Aorta (tissue), 5 donors: ENCODE measurements at regions of chr14 and their contacts with region 1.

Region 1: DNA sequence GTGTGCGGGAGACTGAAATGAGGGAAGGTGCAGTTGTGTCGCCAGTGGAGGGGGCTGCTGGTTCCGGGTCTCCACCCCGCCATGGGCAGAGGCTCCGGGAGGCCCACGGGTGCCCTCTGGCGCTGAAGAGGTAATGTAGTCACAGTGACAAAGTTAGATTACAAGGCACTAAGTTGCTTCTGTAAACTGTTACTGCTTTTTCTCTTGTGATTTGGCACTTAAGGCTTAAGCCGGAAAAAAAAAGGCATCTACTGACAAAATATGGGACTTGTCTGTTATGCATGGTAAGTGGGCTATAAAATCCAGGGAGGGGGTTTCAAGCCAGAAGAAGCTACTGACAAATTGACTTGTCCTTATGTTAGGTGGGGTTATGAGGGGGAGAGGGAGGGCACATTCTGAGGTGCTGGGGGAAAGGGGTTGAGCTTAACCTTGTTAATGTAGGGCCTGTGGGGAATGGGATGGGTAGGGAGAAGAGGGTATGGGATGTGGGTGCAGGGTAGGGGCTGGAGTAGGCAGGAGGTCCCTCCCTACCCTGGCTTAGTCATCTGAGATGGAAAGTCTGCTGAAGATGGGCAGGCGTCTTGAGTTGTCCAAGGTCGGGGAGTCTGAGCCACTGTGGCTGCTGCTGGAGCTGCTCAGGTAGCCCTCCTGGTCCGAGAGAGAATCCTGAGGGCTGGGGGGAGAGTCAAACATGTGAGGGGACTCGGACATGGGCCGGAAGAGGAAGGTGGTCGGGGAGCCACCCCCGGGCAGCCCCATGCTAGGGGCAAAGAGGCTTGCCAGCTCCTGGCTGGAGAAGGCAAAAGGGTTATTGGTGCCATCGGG is 3.7 kb downstream of the ZFP36L1 start:
- DNase-seq: peak; percentile 92 to 95
- ATAC-seq: no peak
- H3K4me3 ChIP-seq: peak overlapping the region in 1 of 2 donors; percentile 31
- H3K27ac ChIP-seq: peak overlapping the region; percentile 7 to 82
- H3K4me1 ChIP-seq: peaks cover 0 to 6% of the 10 kb centered on the region in 2 donors
- H3K27me3 ChIP-seq: peaks cover 0 to 2% of the 10 kb centered on the region in 2 donors

Region 2: DNA sequence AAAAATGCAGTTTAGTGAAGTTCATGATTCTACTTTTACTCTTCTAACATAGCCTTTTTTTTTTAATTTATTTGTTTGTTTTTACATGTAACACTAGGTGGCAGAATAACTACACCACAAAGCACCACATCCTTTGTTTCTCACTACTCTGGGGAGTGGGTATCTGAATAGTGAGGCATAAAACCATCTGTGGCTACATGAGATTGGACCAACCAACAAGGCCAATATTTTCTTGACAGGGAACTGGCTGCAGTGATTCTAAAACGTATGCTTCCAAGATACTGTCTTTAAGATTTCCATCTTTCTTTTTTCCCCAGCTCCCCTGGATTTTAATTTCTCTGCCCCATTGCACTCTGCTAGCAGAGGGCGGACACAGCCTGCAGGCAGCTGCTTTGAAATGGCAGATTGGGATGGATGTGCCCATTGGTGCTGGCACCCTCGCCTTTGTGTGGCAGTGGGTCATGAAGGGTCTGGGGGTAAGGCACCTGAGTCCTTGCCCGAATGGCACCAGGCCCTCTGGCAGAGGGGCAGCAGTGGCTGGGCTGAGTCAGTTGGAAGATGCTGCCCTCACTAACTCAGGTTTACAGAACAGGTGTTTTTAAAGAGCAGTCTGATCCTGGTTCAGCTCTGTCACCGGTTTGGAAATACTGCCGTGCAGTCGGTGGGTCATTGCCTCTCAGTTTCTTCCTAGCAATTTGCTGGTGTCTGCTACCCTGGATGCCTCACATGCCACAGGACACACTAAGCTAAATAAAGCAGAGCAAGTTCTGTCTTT is 540.5 kb before region 1 on chr14:
- intact Hi-C with region 1: loop called (anchors 2 kb)
- DNase-seq: peak; percentile 57 to 73
- ATAC-seq: peak; percentile 82
- H3K4me3 ChIP-seq: no peak overlapping the region
- H3K27ac ChIP-seq: peak overlapping the region in 1 of 2 donors; percentile 82
- H3K4me1 ChIP-seq: peaks cover 19 to 21% of the 10 kb centered on the region in 2 donors
- H3K27me3 ChIP-seq: no peaks in the 10 kb centered on the region

Region 3: GRCh38 chr14:68506021-68506644 is 283.1 kb before region 1 on chr14:
- intact Hi-C with region 1: no loop called
- DNase-seq: no peak
- ATAC-seq: no peak
- H3K4me3 ChIP-seq: no peak overlapping the region
- H3K27ac ChIP-seq: peak overlapping the region in 1 of 2 donors; percentile 26
- H3K4me1 ChIP-seq: peaks cover 0 to 4% of the 10 kb centered on the region in 2 donors
- H3K27me3 ChIP-seq: no peaks in the 10 kb centered on the region

Region 4: GRCh38 chr14:68526420-68527105 is 262.6 kb before region 1 on chr14:
- intact Hi-C with region 1: loop called (anchors 5 kb)
- DNase-seq: peak; percentile 85 to 90
- ATAC-seq: peak; percentile 78
- H3K4me3 ChIP-seq: no peak overlapping the region
- H3K27ac ChIP-seq: peak overlapping the region; percentile 62 to 88
- H3K4me1 ChIP-seq: peaks cover 0 to 4% of the 10 kb centered on the region in 2 donors
- H3K27me3 ChIP-seq: no peaks in the 10 kb centered on the region

Region 5: GRCh38 chr14:68563246-68564131 is 225.7 kb before region 1 on chr14:
- intact Hi-C with region 1: loop called in 1 of 2 experiments (anchors 5 kb)
- DNase-seq: no peak
- ATAC-seq: peak; percentile 64
- H3K4me3 ChIP-seq: no peak overlapping the region
- H3K27ac ChIP-seq: peak overlapping the region; percentile 91 to 99
- H3K4me1 ChIP-seq: peaks cover 0 to 6% of the 10 kb centered on the region in 2 donors
- H3K27me3 ChIP-seq: no peaks in the 10 kb centered on the region

Region 6: GRCh38 chr14:68627880-68628607 is 161.2 kb before region 1 on chr14:
- intact Hi-C with region 1: loop called (anchors 2 to 10 kb)
- DNase-seq: peak; percentile 63 to 74
- ATAC-seq: no peak
- H3K4me3 ChIP-seq: no peak overlapping the region
- H3K27ac ChIP-seq: no peak overlapping the region
- H3K4me1 ChIP-seq: peaks cover 0 to 3% of the 10 kb centered on the region in 2 donors
- H3K27me3 ChIP-seq: no peaks in the 10 kb centered on the region

Region 7: DNA sequence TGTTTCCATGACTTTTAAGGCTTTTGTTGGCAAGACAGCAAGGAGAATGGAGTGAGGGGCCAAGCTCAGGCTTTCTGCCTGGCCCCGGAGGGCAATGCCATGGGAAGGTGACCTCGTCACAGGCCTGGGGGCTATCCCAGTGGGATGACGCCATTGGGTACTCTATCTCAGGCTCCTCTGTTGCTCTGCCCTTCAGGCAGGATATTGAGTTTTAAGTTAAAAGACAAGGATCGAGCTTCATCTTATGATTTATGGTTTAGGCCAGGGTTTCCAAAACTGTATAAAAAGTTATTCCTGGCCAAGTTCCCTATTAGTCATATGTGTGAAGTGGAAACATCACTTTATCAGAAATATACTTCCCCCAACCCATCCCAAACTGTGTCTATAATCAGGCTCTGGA is 124.1 kb before region 1 on chr14:
- intact Hi-C with region 1: loop called in 1 of 2 experiments (anchors 5 kb)
- DNase-seq: no peak
- ATAC-seq: no peak
- H3K4me3 ChIP-seq: no peak overlapping the region
- H3K27ac ChIP-seq: no peak overlapping the region
- H3K4me1 ChIP-seq: peaks cover 5 to 9% of the 10 kb centered on the region in 2 donors
- H3K27me3 ChIP-seq: no peaks in the 10 kb centered on the region

Region 8: DNA sequence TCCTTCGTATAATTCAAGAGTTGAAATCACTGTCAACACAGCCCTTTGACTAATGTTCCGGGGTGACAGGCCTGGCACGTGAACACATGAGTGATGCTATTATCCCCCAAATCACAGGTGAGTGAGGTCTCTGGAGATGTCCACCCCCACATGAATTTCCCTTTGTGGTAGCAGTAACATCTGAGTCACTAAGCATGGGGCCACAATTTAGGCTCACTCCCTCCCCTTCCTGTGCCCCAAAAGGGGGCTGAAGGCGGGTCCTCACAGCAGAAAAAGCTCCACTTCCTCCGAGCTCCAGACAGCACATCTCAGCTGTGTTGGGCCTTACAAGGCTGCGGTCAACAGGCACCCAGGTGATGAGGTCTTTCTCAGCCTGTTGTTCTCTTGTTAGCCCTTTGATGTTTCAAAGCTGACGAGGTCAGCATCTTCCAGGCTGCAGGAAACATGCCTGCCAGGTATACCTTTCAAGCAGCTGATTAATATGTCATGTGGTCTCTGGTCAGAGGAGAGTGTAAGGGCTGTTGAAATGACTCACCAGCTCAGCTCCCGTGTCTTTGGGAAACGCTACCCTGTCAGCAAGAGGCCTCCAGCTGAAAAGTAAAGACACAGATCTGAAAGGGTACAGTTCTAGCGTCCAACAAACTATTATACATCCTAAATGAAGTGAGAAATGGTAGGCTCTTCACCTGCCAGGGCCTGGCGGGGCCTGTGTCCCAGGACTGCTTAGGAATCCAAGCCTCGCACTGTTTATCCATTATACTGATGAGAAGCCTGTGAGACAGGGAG is 103.6 kb before region 1 on chr14:
- intact Hi-C with region 1: loop called (anchors 5 kb)
- DNase-seq: no peak
- ATAC-seq: no peak
- H3K4me3 ChIP-seq: no peak overlapping the region
- H3K27ac ChIP-seq: no peak overlapping the region
- H3K4me1 ChIP-seq: peaks cover 2 to 11% of the 10 kb centered on the region in 2 donors
- H3K27me3 ChIP-seq: no peaks in the 10 kb centered on the region

Region 9: DNA sequence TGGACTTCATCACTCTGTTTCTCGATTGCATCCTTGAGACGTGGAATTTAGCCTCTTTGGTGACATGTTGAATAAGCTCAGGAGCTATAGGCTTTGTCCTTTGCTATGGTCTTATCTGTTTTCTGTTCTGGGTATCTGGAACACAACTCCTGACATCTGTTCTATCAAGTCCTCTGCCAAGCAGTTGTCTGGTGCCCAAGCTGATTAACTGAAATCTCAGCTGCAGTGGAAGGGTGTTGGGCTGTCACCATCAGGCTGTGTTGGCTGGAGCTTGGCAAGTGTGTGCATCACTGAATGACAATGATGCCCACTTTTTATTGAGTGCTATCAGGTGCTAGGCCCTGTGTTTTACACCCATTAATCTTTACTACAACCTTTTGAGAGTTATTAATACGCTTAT is 1167.8 kb after region 1 on chr14:
- intact Hi-C with region 1: no loop called
- DNase-seq: no peak
- ATAC-seq: no peak
- H3K4me3 ChIP-seq: no peak overlapping the region
- H3K27ac ChIP-seq: no peak overlapping the region
- H3K4me1 ChIP-seq: no peaks in the 10 kb centered on the region
- H3K27me3 ChIP-seq: peaks cover 0 to 2% of the 10 kb centered on the region in 2 donors